ENCODE measurements at regions of chr11 and their contacts with region 1.

Region 1: DNA sequence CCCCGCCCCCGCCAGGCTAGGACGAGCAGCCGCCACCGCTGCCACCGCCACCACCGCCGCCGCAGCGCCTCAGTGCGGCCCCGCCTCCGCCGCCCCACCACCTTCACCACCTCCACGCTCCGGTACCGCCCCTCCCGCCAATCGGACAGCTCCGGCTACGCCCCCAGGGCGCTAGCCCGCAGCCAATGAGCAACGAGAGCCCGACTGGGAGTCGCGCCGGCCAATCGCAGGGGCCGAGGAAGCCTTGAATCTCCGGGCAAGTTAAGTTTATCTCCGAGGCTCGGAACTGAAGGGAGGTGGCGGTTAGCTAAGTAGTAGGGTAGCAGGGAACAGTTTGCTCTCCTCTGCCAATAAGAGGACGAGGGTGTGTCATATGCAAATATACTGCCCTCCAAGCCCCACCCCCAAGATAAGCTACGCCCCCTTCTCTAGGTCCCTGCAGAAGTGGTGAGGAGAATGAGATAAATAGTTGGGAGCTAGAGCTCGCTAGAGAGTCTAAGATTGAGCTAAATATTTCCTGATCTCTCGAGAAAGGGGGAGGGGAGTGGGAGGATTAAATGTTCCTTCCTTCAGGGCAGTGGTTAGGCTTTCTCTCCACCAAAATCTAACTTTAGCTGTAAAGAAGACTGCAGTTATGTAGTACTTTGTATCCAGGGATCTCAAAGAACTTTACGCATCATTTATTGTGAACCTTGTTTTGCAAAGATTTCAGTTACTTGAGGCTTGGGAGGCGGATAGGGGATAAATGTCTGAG is at the start of gene SESN3:
- DNase-seq: peak; percentile 93
- ATAC-seq: peak; percentile 89
- H3K4me3 ChIP-seq: peak within 1 kb of the TSS; percentile 62
- H3K27ac ChIP-seq: no peak within 1 kb of the TSS
- H3K4me1 ChIP-seq: peaks cover 8% of the 10 kb centered on the region
- H3K27me3 ChIP-seq: peaks cover 0 to 27% of the 10 kb centered on the region in 2 experiments; a peak in 2 of 4 replicates
- CTCF ChIP-seq: no peak; a peak in 1 of 6 replicates
- EP300 ChIP-seq: peak in 1 of 2 experiments; percentile 23; a peak in 1 of 4 replicates
- POLR2A ChIP-seq: peak; percentile 57; the same call in 1 of the 2 replicates
- RAD21 ChIP-seq: peak; percentile 35; the same call in 1 of the 2 replicates
- polyA plus RNA-seq, gene SESN3: 0.68 to 1.5 TPM

Region 2: DNA sequence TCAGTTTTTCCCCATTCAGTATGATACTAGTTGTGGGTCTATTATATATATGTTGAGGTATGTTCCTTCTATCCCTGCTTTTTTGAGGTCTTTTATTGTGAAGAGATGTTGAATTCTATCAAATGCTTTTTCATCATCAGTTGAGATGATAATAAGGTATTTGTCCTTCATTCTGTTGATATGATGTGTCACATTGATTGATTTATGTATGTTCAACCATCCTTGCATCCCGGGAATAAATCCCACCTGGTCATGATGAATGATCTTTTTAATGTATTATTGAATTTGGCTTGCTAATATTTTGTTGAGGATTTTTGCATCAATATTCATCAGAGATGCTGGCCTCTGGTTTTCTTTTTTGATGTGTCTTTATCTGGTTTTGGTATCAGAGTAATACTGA is 115.7 kb before region 1 on chr11:
- CTCF ChIA-PET with region 1: no interaction called
- POLR2A ChIA-PET with region 1: no interaction called
- RAD21 ChIA-PET with region 1: no interaction called
- SMC1A ChIA-PET with region 1: no interaction called
- in situ Hi-C with region 1: no loop called
- intact Hi-C with region 1: no loop called
- DNase-seq: no peak
- ATAC-seq: no peak
- H3K4me3 ChIP-seq: no peak overlapping the region
- H3K27ac ChIP-seq: no peak overlapping the region
- H3K4me1 ChIP-seq: no peaks in the 10 kb centered on the region
- H3K27me3 ChIP-seq: no peaks in the 10 kb centered on the region
- CTCF ChIP-seq: no peak
- EP300 ChIP-seq: no peak
- POLR2A ChIP-seq: no peak
- RAD21 ChIP-seq: no peak

Region 3: GRCh38 chr11:95175818-95176368 is 55.4 kb before region 1 on chr11:
- CTCF ChIA-PET with region 1: no interaction called
- POLR2A ChIA-PET with region 1: interaction called, 10 read pairs
- RAD21 ChIA-PET with region 1: interaction called, 4 read pairs
- SMC1A ChIA-PET with region 1: interaction called, 5 read pairs
- in situ Hi-C with region 1: no loop called
- intact Hi-C with region 1: no loop called
- DNase-seq: no peak
- ATAC-seq: no peak
- H3K4me3 ChIP-seq: no peak overlapping the region
- H3K27ac ChIP-seq: no peak overlapping the region
- H3K4me1 ChIP-seq: no peaks in the 10 kb centered on the region
- H3K27me3 ChIP-seq: no peaks in the 10 kb centered on the region
- CTCF ChIP-seq: no peak
- EP300 ChIP-seq: no peak
- POLR2A ChIP-seq: no peak
- RAD21 ChIP-seq: no peak

Region 4: GRCh38 chr11:95241681-95242081 is 10.4 kb after region 1 on chr11:
- CTCF ChIA-PET with region 1: interaction called, 21 read pairs
- POLR2A ChIA-PET with region 1: interaction called, 60 read pairs
- RAD21 ChIA-PET with region 1: interaction called, 115 read pairs
- SMC1A ChIA-PET with region 1: interaction called, 61 read pairs
- in situ Hi-C with region 1: no loop called
- intact Hi-C with region 1: no loop called
- DNase-seq: no peak
- ATAC-seq: peak; percentile 88
- H3K4me3 ChIP-seq: peak overlapping the region; percentile 11; the same call in 1 of the 2 replicates
- H3K27ac ChIP-seq: peak overlapping the region; percentile 3; the same call in 1 of the 2 replicates
- H3K4me1 ChIP-seq: peaks cover 9% of the 10 kb centered on the region; the same call in 1 of the 2 replicates
- H3K27me3 ChIP-seq: no peaks in the 10 kb centered on the region
- CTCF ChIP-seq: no peak
- EP300 ChIP-seq: no peak
- POLR2A ChIP-seq: no peak
- RAD21 ChIP-seq: no peak

Region 5: GRCh38 chr11:95296621-95297025 is 65.3 kb after region 1 on chr11:
- CTCF ChIA-PET with region 1: interaction called, 20 read pairs
- POLR2A ChIA-PET with region 1: interaction called, 12 read pairs
- RAD21 ChIA-PET with region 1: interaction called, 25 read pairs
- SMC1A ChIA-PET with region 1: interaction called, 30 read pairs
- in situ Hi-C with region 1: no loop called
- intact Hi-C with region 1: loop called (anchors 2 kb)
- DNase-seq: peak; percentile 39
- ATAC-seq: peak; percentile 97
- H3K4me3 ChIP-seq: peak overlapping the region; percentile 24; the same call in 1 of the 2 replicates
- H3K27ac ChIP-seq: no peak overlapping the region
- H3K4me1 ChIP-seq: peaks cover 15% of the 10 kb centered on the region; the same call in 1 of the 2 replicates
- H3K27me3 ChIP-seq: no peaks in the 10 kb centered on the region; a peak in 4 of 4 replicates
- CTCF ChIP-seq: no peak
- EP300 ChIP-seq: no peak; a peak in 1 of 4 replicates
- POLR2A ChIP-seq: no peak
- RAD21 ChIP-seq: peak; percentile 9; the same call in 1 of the 2 replicates

Region 6: DNA sequence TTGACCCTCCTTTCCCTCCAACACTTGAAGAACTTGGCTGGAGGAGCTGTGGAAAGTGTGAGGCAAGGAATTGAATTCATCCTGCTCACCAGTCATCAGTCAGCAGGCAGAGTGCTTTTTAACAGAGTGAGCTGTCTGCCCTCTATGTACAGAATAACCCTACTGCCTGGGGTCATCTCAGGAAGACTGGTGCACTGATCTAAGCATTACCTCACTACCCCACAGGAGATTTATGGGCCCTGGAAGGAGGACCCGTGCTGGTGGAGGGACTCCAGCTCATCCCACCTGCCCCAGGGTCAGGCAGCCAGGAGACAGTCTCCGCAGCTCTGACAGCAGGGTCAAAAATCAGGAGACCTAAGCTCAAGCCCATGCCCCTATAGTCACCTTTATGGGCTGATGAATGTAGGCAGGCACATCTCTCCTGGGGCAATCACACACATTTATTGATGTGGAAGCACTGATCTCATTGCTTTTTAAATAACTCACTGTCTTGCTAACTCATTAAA is 270.5 kb after region 1 on chr11:
- CTCF ChIA-PET with region 1: no interaction called
- POLR2A ChIA-PET with region 1: no interaction called
- RAD21 ChIA-PET with region 1: no interaction called
- SMC1A ChIA-PET with region 1: no interaction called
- in situ Hi-C with region 1: no loop called
- intact Hi-C with region 1: no loop called
- DNase-seq: no peak
- ATAC-seq: no peak
- H3K4me3 ChIP-seq: no peak overlapping the region
- H3K27ac ChIP-seq: no peak overlapping the region
- H3K4me1 ChIP-seq: no peaks in the 10 kb centered on the region
- H3K27me3 ChIP-seq: peaks cover 0 to 2% of the 10 kb centered on the region in 2 experiments; a peak in 2 of 4 replicates
- CTCF ChIP-seq: no peak
- EP300 ChIP-seq: no peak
- POLR2A ChIP-seq: no peak
- RAD21 ChIP-seq: no peak

Region 7: GRCh38 chr11:95556342-95557163 is 325.2 kb after region 1 on chr11:
- CTCF ChIA-PET with region 1: no interaction called
- POLR2A ChIA-PET with region 1: interaction called, 3 read pairs
- RAD21 ChIA-PET with region 1: interaction called, 18 read pairs
- SMC1A ChIA-PET with region 1: interaction called, 14 read pairs
- in situ Hi-C with region 1: no loop called
- intact Hi-C with region 1: loop called (anchors 5 kb)
- DNase-seq: peak; percentile 75
- ATAC-seq: peak; percentile 91
- H3K4me3 ChIP-seq: peak overlapping the region; percentile 22; the same call in 1 of the 2 replicates
- H3K27ac ChIP-seq: peak overlapping the region; percentile 86
- H3K4me1 ChIP-seq: peaks cover 21% of the 10 kb centered on the region
- H3K27me3 ChIP-seq: no peaks in the 10 kb centered on the region
- CTCF ChIP-seq: no peak
- EP300 ChIP-seq: peak; percentile 88 to 89
- POLR2A ChIP-seq: no peak
- RAD21 ChIP-seq: no peak

Region 8: DNA sequence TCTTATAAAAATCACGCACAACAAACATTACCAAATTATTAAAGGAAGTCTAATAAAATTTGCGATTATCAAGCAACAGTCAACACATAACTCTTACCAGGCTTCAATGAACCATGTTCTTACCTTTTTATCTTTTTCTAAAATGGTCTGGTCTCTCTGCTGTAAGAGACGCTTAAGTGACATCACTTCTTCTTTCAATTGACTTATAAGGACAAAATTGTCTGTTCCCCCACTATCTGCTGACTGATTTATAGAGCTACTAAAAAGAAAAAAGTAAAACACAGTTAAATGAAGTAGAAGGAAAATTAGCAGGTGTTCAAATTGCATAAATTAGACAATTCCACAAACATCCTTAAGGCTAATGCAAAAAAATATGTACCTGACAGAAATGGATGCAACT is 547.4 kb after region 1 on chr11:
- CTCF ChIA-PET with region 1: interaction called, 5 read pairs
- POLR2A ChIA-PET with region 1: no interaction called
- RAD21 ChIA-PET with region 1: no interaction called
- SMC1A ChIA-PET with region 1: interaction called, 3 read pairs
- in situ Hi-C with region 1: no loop called
- intact Hi-C with region 1: loop called (anchors 5 kb)
- DNase-seq: no peak
- ATAC-seq: peak; percentile 77
- H3K4me3 ChIP-seq: no peak overlapping the region
- H3K27ac ChIP-seq: no peak overlapping the region
- H3K4me1 ChIP-seq: peaks cover 6% of the 10 kb centered on the region; the same call in 1 of the 2 replicates
- H3K27me3 ChIP-seq: no peaks in the 10 kb centered on the region
- CTCF ChIP-seq: no peak
- EP300 ChIP-seq: no peak
- POLR2A ChIP-seq: no peak
- RAD21 ChIP-seq: no peak